ENCODE measurements at regions of chr19 and their contacts with region 1.

Region 1: GRCh38 chr19:55681131-55682087 is 6.4 kb downstream of the EPN1 start:
- DNase-seq: peak; percentile 53
- ATAC-seq: peak; percentile 78
- H3K4me3 ChIP-seq: no peak overlapping the region
- H3K27ac ChIP-seq: peak overlapping the region; percentile 7; the same call in 1 of the 2 replicates
- H3K4me1 ChIP-seq: peaks cover 7% of the 10 kb centered on the region
- H3K27me3 ChIP-seq: no peaks in the 10 kb centered on the region
- CTCF ChIP-seq: no peak
- POLR2A ChIP-seq: no peak
- RAD21 ChIP-seq: no peak

Region 2: GRCh38 chr19:55648590-55649267 is 32.7 kb before region 1 on chr19:
- CTCF ChIA-PET with region 1: no interaction called
- POLR2A ChIA-PET with region 1: interaction called, 12 read pairs
- dilution Hi-C with region 1: no loop called
- in situ Hi-C with region 1: no loop called
- intact Hi-C with region 1: no loop called
- DNase-seq: no peak
- ATAC-seq: no peak
- H3K4me3 ChIP-seq: peak overlapping the region; percentile 86
- H3K27ac ChIP-seq: peak overlapping the region; percentile 97
- H3K4me1 ChIP-seq: peaks cover 8% of the 10 kb centered on the region
- H3K27me3 ChIP-seq: no peaks in the 10 kb centered on the region
- CTCF ChIP-seq: no peak
- POLR2A ChIP-seq: no peak
- RAD21 ChIP-seq: no peak